ENCODE measurements at regions of chr1 and their contacts with region 1.

Region 1: GRCh38 chr1:10032590-10033358 is at the start of gene UBE4B:
- DNase-seq: peak; percentile 99
- ATAC-seq: peak; percentile 97
- H3K4me3 Mint-ChIP-seq: peak within 1 kb of the TSS; percentile 87
- H3K27ac Mint-ChIP-seq: peak within 1 kb of the TSS; percentile 93
- H3K4me1 Mint-ChIP-seq: peaks cover 18% of the 10 kb centered on the region
- H3K27me3 Mint-ChIP-seq: no peaks in the 10 kb centered on the region
- CTCF ChIP-seq: no peak
- total RNA-seq, gene UBE4B: 21.0 to 26.2 TPM

Region 2: GRCh38 chr1:9874959-9875635 is 157.7 kb before region 1 on chr1:
- CTCF ChIA-PET with region 1: interaction called, 3 read pairs
- POLR2A ChIA-PET with region 1: no interaction called
- intact Hi-C with region 1: loop called (anchors 10 kb)
- DNase-seq: peak; percentile 83
- ATAC-seq: peak; percentile 99
- H3K4me3 Mint-ChIP-seq: no peak overlapping the region
- H3K27ac Mint-ChIP-seq: no peak overlapping the region
- H3K4me1 Mint-ChIP-seq: peaks cover 4% of the 10 kb centered on the region
- H3K27me3 Mint-ChIP-seq: no peaks in the 10 kb centered on the region
- CTCF ChIP-seq: peak; percentile 95

Region 3: GRCh38 chr1:10087210-10087609 is 54.4 kb after region 1 on chr1:
- CTCF ChIA-PET with region 1: no interaction called
- POLR2A ChIA-PET with region 1: no interaction called
- intact Hi-C with region 1: no loop called
- DNase-seq: no peak
- ATAC-seq: no peak
- H3K4me3 Mint-ChIP-seq: no peak overlapping the region
- H3K27ac Mint-ChIP-seq: no peak overlapping the region
- H3K4me1 Mint-ChIP-seq: peaks cover 8% of the 10 kb centered on the region
- H3K27me3 Mint-ChIP-seq: no peaks in the 10 kb centered on the region
- CTCF ChIP-seq: no peak

Region 4: DNA sequence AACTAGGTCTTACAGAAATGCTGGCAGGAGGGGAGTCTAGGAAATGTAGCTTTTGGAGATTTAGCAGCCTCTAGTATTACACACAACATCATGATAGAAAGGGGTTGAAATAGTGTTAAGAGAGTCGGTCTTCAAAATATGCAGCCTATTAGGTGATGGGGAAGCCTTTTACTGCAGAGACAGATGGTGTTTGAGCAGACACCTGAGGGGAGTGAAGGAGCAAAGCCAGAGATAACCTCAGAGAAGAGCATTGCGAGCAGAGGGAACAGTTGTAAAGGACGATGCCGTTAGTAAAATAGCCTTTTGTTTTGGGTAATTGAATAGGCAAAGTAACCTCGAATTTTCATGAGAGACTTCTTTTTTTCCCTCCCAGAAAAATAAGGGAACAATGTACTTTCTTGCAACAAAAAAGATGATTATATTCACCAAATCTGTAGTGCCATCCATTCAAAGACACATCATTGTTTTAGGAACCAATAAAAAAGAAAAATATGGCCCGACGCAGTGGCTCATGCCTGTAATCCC is 111.2 kb after region 1 on chr1:
- CTCF ChIA-PET with region 1: no interaction called
- POLR2A ChIA-PET with region 1: no interaction called
- intact Hi-C with region 1: no loop called
- DNase-seq: no peak
- ATAC-seq: no peak
- H3K4me3 Mint-ChIP-seq: no peak overlapping the region
- H3K27ac Mint-ChIP-seq: no peak overlapping the region
- H3K4me1 Mint-ChIP-seq: no peaks in the 10 kb centered on the region
- H3K27me3 Mint-ChIP-seq: no peaks in the 10 kb centered on the region
- CTCF ChIP-seq: no peak